PC-3 (cell line): ENCODE measurements at regions of chr5 and their contacts with region 1.

Region 1: GRCh38 chr5:141564216-141564692 is 54.5 kb downstream of the DIAPH1 start:
- DNase-seq: peak; percentile 89
- ATAC-seq: no peak; the same call in 1 of the 2 replicates
- H3K4me3 ChIP-seq: no peak overlapping the region
- H3K27ac ChIP-seq: peak overlapping the region; percentile 89
- H3K4me1 ChIP-seq: peaks cover 42% of the 10 kb centered on the region
- H3K27me3 ChIP-seq: no peaks in the 10 kb centered on the region
- CTCF ChIP-seq: peak; percentile 92

Region 2: GRCh38 chr5:140840978-140841959 is 723.0 kb before region 1 on chr5 and contains the start of gene PCDHA8:
- CTCF ChIA-PET with region 1: interaction called, 4 read pairs
- POLR2A ChIA-PET with region 1: no interaction called
- intact Hi-C with region 1: loop called (anchors 10 kb)
- DNase-seq: peak; percentile 73
- ATAC-seq: peak; percentile 92
- H3K4me3 ChIP-seq: peak within 1 kb of the TSS; percentile 74
- H3K27ac ChIP-seq: no peak within 1 kb of the TSS
- H3K4me1 ChIP-seq: no peaks in the 10 kb centered on the region
- H3K27me3 ChIP-seq: no peaks in the 10 kb centered on the region
- CTCF ChIP-seq: peak; percentile 69
- total RNA-seq, gene PCDHA8: 0.11 TPM in 1 of 2 replicates, not detected in the other

Region 3: DNA sequence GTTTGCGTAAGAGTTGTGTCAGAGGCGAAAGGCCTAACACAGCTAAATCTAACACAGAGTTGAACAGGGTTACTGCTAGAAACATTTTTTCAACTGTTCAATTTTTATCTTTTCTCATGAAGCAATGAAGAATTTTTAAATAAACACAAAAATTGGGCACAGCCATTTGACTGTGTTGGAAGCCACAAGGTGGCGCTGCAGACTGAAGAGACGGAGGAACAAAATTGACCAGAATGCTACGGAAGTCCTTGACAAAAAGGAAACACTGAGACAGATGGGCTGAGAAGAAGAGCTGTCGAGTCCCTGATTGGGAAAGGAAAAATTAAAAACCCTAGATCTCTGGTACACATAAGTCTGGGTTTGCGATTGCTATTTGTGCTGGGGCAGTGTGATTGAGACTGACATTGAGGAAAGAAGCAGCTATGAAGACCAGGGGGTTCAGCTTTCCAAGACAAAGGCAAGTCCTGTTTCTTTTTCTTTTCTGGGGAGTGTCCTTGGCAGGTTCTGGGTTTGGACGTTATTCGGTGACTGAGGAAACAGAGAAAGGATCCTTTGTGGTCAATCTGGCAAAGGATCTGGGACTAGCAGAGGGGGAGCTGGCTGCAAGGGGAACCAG is 377.2 kb before region 1 on chr5 and contains the start of gene PCDHB9:
- CTCF ChIA-PET with region 1: no interaction called
- POLR2A ChIA-PET with region 1: no interaction called
- intact Hi-C with region 1: loop called (anchors 2 kb)
- DNase-seq: peak; percentile 47
- ATAC-seq: peak; percentile 66
- H3K4me3 ChIP-seq: peak within 1 kb of the TSS; percentile 50
- H3K27ac ChIP-seq: no peak within 1 kb of the TSS
- H3K4me1 ChIP-seq: no peaks in the 10 kb centered on the region
- H3K27me3 ChIP-seq: no peaks in the 10 kb centered on the region
- CTCF ChIP-seq: peak; percentile 69
- total RNA-seq, gene PCDHB9: 0.23 and 0.73 TPM in 2 replicates

Region 4: GRCh38 chr5:141402553-141403260 is 161.5 kb before region 1 on chr5 and contains the start of gene PCDHGA9:
- CTCF ChIA-PET with region 1: interaction called, 3 read pairs
- POLR2A ChIA-PET with region 1: interaction called, 5 read pairs
- intact Hi-C with region 1: loop called (anchors 1 kb)
- DNase-seq: no peak
- ATAC-seq: no peak
- H3K4me3 ChIP-seq: no peak within 1 kb of the TSS
- H3K27ac ChIP-seq: no peak within 1 kb of the TSS
- H3K4me1 ChIP-seq: no peaks in the 10 kb centered on the region
- H3K27me3 ChIP-seq: no peaks in the 10 kb centered on the region
- CTCF ChIP-seq: no peak
- total RNA-seq, gene PCDHGA9: 1.9 and 2.9 TPM in 2 replicates

Region 5: GRCh38 chr5:141532726-141533125 is 31.5 kb before region 1 on chr5:
- CTCF ChIA-PET with region 1: interaction called, 10 read pairs
- POLR2A ChIA-PET with region 1: no interaction called
- intact Hi-C with region 1: no loop called
- DNase-seq: no peak
- ATAC-seq: no peak
- H3K4me3 ChIP-seq: no peak overlapping the region
- H3K27ac ChIP-seq: no peak overlapping the region
- H3K4me1 ChIP-seq: no peaks in the 10 kb centered on the region
- H3K27me3 ChIP-seq: no peaks in the 10 kb centered on the region
- CTCF ChIP-seq: no peak